ENCODE measurements at regions of chr19 and their contacts with region 1.

Region 1: GRCh38 chr19:58311345-58311865 is 6.2 kb downstream of the ERVK3-1 start:
- DNase-seq: no peak
- ATAC-seq: no peak
- H3K4me3 Mint-ChIP-seq: no peak overlapping the region
- H3K27ac Mint-ChIP-seq: no peak overlapping the region
- H3K4me1 Mint-ChIP-seq: peaks cover 28% of the 10 kb centered on the region
- H3K27me3 Mint-ChIP-seq: no peaks in the 10 kb centered on the region
- CTCF ChIP-seq: no peak

Region 2: GRCh38 chr19:58203814-58204475 is 107.5 kb before region 1 on chr19:
- CTCF ChIA-PET with region 1: no interaction called
- POLR2A ChIA-PET with region 1: no interaction called
- intact Hi-C with region 1: no loop called
- DNase-seq: no peak
- ATAC-seq: no peak
- H3K4me3 Mint-ChIP-seq: no peak overlapping the region
- H3K27ac Mint-ChIP-seq: no peak overlapping the region
- H3K4me1 Mint-ChIP-seq: no peaks in the 10 kb centered on the region
- H3K27me3 Mint-ChIP-seq: no peaks in the 10 kb centered on the region
- CTCF ChIP-seq: no peak

Region 3: DNA sequence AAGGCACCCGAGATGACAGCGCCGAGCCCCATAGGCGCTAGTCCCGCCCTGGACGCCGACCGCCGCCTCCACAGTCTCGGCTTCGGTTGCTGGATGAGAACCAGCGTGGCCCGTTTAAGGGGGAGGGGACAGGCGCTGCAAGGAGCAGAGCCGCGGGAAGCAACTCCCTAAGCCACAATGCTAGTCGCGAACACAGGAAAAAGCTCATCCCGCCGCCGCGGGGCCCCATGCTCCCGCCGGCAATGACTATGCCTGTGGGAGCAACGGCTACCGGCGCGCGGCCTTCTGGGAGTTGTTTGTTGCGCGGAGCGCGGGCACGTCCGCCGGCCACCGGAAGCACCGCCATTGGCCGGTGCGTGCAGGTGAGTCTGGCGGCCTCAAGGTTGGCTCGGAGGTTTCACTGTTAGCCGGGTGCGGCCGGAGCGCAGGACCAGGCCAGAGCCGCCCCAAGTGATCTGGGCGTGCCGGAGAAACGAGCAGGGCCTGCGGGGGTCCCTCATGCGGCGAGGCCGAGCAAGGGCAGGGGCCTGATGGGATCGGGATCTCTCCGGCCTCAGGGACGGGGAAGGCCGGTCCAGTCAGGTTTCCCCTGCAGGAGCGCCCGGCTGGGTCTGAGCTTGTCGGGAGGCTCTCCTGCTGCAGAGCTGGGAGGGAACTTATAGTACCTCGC is 82.7 kb before region 1 on chr19 and contains the start of gene ZNF544:
- CTCF ChIA-PET with region 1: interaction called, 7 read pairs
- POLR2A ChIA-PET with region 1: no interaction called
- intact Hi-C with region 1: loop called (anchors 5 kb)
- DNase-seq: peak; percentile 81
- ATAC-seq: peak; percentile 85
- H3K4me3 Mint-ChIP-seq: peak within 1 kb of the TSS; percentile 80
- H3K27ac Mint-ChIP-seq: peak within 1 kb of the TSS; percentile 94
- H3K4me1 Mint-ChIP-seq: peaks cover 24% of the 10 kb centered on the region
- H3K27me3 Mint-ChIP-seq: no peaks in the 10 kb centered on the region
- CTCF ChIP-seq: peak; percentile 64
- total RNA-seq, gene ZNF544: 49.8 to 52.3 TPM

Region 4: GRCh38 chr19:58374200-58374599 is 62.8 kb after region 1 on chr19:
- CTCF ChIA-PET with region 1: no interaction called
- POLR2A ChIA-PET with region 1: no interaction called
- intact Hi-C with region 1: no loop called
- DNase-seq: no peak
- ATAC-seq: no peak
- H3K4me3 Mint-ChIP-seq: no peak overlapping the region
- H3K27ac Mint-ChIP-seq: no peak overlapping the region
- H3K4me1 Mint-ChIP-seq: no peaks in the 10 kb centered on the region
- H3K27me3 Mint-ChIP-seq: no peaks in the 10 kb centered on the region
- CTCF ChIP-seq: no peak